ENCODE measurements at regions of chr17 and their contacts with region 1.

Region 1: DNA sequence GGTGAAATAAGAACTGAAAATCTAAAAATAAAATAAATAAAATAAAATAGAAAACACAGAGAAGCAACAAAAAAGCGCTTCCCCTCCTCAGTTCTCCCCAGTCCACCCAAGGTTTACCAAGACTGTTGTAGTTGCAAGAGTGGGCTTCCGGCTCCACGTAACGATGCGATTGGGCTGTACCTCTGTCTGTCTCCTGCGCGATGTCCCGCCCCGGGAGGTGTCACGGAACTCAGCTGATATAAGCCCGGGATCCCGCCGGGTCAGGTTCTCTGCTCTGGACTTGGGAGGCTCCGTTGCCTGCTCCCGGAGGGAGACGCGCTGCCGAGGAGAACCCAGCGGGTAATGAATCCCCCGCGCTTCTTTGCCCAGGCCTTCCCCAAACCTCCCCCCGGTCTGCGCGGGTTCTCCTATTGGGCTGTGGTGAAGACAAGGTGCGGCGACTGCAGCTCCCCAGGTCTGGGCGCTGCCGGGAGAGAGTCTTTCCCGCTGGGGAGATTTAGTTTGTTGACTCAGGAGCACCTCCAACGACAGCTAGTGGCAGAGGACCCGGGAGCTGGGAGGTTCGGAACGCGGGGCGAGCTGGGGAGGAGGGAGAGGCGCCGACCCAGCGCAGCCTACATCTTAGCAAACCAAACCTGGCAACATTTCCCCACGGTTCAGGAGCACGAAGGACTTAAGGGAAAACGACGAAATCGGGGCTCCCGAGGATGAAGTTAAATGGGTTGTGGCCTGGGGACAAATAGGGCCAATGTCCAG is at the start of gene SLFN5:
- DNase-seq: peak; percentile 96 to 97
- ATAC-seq: peak; percentile 97
- H3K4me3 ChIP-seq: peak within 1 kb of the TSS; percentile 75 to 79
- H3K27ac ChIP-seq: peak within 1 kb of the TSS; percentile 20 to 76
- H3K4me1 ChIP-seq: no peaks in the 10 kb centered on the region
- H3K27me3 ChIP-seq: no peaks in the 10 kb centered on the region
- total RNA-seq, gene SLFN5: 40.4 to 66.3 TPM

Region 2: GRCh38 chr17:35432176-35433074 is 189.4 kb after region 1 on chr17 and contains the start of gene SLFN12:
- intact Hi-C with region 1: loop called (anchors 2 to 5 kb)
- DNase-seq: peak in 1 of 2 donors; percentile 77
- ATAC-seq: peak; percentile 95
- H3K4me3 ChIP-seq: peak within 1 kb of the TSS; percentile 66 to 100
- H3K27ac ChIP-seq: peak within 1 kb of the TSS; percentile 63 to 72
- H3K4me1 ChIP-seq: peaks cover 0 to 7% of the 10 kb centered on the region in 2 donors
- H3K27me3 ChIP-seq: no peaks in the 10 kb centered on the region
- total RNA-seq, gene SLFN12: 19.5 to 20.8 TPM